ENCODE measurements at regions of chr1 and their contacts with region 1.

Region 1: GRCh38 chr1:226062558-226063223 is at the start of gene H3-3A:
- H3K4me3 ChIP-seq: peak within 1 kb of the TSS; percentile 95
- H3K27ac ChIP-seq: peak within 1 kb of the TSS; percentile 98
- H3K4me1 ChIP-seq: peaks cover 14% of the 10 kb centered on the region; the same call in 1 of the 2 replicates
- CTCF ChIP-seq: peak; percentile 92

Region 2: DNA sequence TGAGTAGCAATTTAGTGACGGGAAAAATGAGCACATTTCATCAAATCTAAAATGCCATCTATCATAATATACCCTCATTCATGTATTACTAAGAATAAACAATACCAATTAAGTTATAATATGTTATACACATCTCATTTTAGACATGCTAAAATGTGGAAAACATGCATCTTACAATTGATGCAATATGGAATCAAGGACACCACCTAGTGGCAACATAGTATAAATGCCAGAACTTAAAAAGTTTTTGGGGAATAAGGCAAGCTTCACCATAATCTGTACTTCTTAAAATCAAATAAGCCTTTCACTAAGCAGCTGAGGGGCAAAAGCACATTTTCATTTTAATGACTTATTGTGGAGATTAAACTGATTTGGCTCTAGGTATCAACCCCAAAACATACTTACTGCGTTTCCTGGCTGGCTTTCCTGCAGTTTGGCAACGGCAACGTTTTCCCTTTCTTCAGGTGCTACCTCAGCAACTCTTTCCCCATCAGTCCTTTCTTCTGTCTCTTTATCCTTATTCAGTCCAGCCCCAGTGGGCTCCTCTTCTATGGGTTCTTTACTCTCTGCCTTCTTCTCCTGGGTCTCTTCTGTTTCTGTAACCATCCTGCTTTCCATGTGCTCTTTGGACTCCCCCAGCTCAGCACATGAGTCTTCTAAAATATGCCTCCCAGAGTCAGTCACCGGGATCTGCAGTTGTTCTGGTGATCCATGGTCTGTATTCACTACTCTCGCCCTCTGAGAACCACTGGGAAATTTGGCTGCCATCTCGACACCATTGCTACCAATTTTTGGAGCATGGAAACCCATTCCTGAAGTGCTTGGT is 75.0 kb before region 1 on chr1:
- CTCF ChIA-PET with region 1: interaction called, 11 read pairs
- POLR2A ChIA-PET with region 1: interaction called, 8 read pairs
- H3K4me3 ChIP-seq: no peak overlapping the region
- H3K27ac ChIP-seq: no peak overlapping the region
- H3K4me1 ChIP-seq: no peaks in the 10 kb centered on the region
- CTCF ChIP-seq: peak; percentile 53; the same call in 1 of the 2 replicates

Region 3: GRCh38 chr1:226034482-226034881 is 28.2 kb before region 1 on chr1:
- CTCF ChIA-PET with region 1: interaction called, 5 read pairs
- POLR2A ChIA-PET with region 1: interaction called, 11 read pairs
- H3K4me3 ChIP-seq: no peak overlapping the region
- H3K27ac ChIP-seq: no peak overlapping the region
- H3K4me1 ChIP-seq: no peaks in the 10 kb centered on the region
- CTCF ChIP-seq: no peak

Region 4: DNA sequence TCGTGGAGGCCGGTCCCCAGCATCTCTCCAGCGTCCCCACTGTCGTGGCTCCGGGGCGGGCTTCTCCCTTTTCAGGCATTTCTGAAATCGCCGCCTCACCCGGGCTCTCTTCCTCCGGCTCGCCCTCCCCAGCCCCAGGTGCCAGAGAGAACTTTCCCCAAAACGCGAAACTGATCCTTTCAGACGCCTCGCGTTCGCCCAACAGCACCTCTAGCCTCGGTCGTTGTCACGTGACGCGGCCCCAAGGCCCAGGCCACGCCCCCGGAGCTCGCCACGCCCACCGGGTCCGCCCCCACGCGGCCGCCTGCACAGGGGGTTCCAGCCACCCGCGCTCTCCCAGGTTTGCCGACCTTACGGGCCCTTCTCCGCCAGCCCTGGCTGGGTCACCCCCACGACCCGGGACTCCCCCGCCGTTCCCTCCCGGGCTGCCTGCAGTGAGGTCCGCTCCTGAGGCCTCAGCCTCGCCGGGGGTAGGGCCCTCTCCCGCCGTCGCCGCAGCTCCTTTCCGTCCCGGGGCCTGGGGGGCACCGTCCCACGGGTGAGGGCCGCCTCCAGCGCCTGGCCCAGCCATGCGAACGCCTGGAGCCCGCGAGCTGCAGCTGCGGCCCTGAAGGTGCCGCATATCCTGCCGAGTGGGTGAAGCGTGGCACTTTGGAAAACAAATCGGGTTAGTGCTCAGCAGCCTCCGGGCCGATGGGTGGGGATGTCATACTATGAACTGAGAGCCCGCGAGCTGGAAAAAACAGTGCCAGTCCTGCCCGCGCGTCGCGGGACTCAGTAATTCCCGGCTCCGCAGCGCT is 20.8 kb after region 1 on chr1:
- CTCF ChIA-PET with region 1: interaction called, 23 read pairs
- POLR2A ChIA-PET with region 1: interaction called, 38 read pairs
- H3K4me3 ChIP-seq: peak overlapping the region; percentile 61
- H3K27ac ChIP-seq: peak overlapping the region; percentile 63; the same call in 1 of the 2 replicates
- H3K4me1 ChIP-seq: no peaks in the 10 kb centered on the region
- CTCF ChIP-seq: peak; percentile 71

Region 5: DNA sequence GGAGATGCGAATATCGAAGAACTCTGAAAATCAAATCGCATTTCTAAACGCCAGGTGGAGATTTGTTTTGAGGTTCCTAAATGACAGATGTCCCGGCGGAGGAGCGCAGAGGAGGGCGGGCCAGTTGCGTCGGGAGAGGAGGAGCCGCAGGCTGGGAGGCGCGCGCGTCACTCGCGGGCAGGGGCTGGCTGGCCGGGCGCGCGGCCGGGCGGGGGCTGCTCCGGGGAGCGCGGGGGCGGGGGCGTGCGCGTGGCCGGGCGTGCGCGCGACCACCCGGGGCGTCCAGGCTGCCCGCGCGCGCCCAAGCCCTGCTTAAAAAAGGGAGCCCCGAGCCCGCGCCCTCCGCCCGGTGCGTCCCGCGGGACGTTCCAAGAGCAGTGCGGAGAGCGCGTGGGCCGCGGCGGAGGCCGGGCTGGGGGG is 47.1 kb after region 1 on chr1:
- CTCF ChIA-PET with region 1: interaction called, 35 read pairs
- POLR2A ChIA-PET with region 1: interaction called, 42 read pairs
- H3K4me3 ChIP-seq: peak overlapping the region; percentile 58
- H3K27ac ChIP-seq: peak overlapping the region; percentile 89
- H3K4me1 ChIP-seq: peaks cover 13% of the 10 kb centered on the region
- CTCF ChIP-seq: no peak

Region 6: GRCh38 chr1:226248091-226248490 is 185.4 kb after region 1 on chr1:
- CTCF ChIA-PET with region 1: no interaction called
- POLR2A ChIA-PET with region 1: no interaction called
- H3K4me3 ChIP-seq: no peak overlapping the region
- H3K27ac ChIP-seq: no peak overlapping the region
- H3K4me1 ChIP-seq: no peaks in the 10 kb centered on the region
- CTCF ChIP-seq: no peak

Region 7: GRCh38 chr1:226332947-226333346 is 270.3 kb after region 1 on chr1:
- CTCF ChIA-PET with region 1: interaction called, 11 read pairs
- POLR2A ChIA-PET with region 1: no interaction called
- H3K4me3 ChIP-seq: peak overlapping the region; percentile 25; the same call in 1 of the 2 replicates
- H3K27ac ChIP-seq: no peak overlapping the region
- H3K4me1 ChIP-seq: peaks cover 3% of the 10 kb centered on the region; the same call in 1 of the 2 replicates
- CTCF ChIP-seq: no peak

Region 8: GRCh38 chr1:226457307-226457712 is 394.6 kb after region 1 on chr1:
- CTCF ChIA-PET with region 1: no interaction called
- POLR2A ChIA-PET with region 1: no interaction called
- H3K4me3 ChIP-seq: no peak overlapping the region
- H3K27ac ChIP-seq: no peak overlapping the region
- H3K4me1 ChIP-seq: no peaks in the 10 kb centered on the region
- CTCF ChIP-seq: no peak